ENCODE measurements at regions of chr3 and their contacts with region 1.

Region 1: DNA sequence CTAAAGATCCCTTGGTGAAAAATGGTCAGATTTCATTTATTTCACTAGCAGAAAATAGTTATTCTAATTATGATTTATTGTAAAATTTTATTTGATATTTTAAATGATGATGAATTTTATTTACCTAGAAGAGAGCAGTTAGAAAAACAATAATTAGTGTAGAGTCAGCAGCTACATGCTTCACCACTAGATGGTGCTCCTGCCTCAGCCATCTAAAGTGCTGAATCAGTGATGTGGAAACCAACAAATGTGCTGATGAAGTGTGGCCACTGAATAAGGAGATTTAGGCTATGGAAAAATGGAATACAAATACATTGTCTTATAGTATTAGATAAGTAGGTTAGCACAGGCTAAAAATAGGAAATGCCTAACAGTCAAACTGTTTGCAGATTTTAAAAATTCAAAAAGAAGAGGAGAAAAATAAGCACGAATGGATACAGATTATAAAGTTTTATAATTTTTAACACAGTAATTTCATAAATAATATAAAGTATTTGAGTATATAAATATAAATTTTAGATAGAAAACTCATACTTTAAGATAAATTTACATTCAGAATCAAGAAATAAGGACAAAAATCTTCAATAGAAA is 109.8 kb downstream of the PPP2R3A start:
- DNase-seq: peak; percentile 74 to 78
- H3K4me3 ChIP-seq: no peak overlapping the region
- H3K27ac ChIP-seq: no peak overlapping the region
- H3K4me1 ChIP-seq: peaks cover 0 to 24% (median 15%) of the 10 kb centered on the region in 4 donors
- H3K27me3 ChIP-seq: no peaks in the 10 kb centered on the region
- CTCF ChIP-seq: peak; percentile 87 to 92

Region 2: GRCh38 chr3:135992072-135992471 is 83.2 kb before region 1 on chr3:
- intact Hi-C with region 1: no loop called
- DNase-seq: no peak
- H3K4me3 ChIP-seq: no peak overlapping the region
- H3K27ac ChIP-seq: peak overlapping the region; percentile 13 to 33
- H3K4me1 ChIP-seq: peaks cover 0 to 54% (median 2%) of the 10 kb centered on the region in 4 donors
- H3K27me3 ChIP-seq: no peaks in the 10 kb centered on the region
- CTCF ChIP-seq: no peak

Region 3: DNA sequence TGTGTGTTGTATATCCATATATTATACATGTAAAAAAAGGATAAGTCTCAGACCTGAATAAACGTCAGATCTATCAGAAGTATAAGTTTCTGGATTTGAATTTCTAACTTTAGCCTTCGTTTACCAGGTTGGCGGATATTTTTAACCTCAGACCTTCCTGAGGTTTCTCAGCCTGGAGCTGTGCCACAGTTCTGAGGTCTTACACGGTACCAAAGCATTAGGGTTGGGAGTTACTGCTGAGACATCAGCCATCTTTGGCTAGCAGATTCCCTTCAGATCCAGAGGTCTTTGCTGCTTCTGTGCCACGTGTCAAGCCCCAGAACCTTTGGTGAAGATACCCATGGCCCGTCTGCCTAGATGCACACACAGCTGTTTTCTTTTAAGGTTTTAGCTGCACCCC is 25.1 kb before region 1 on chr3:
- intact Hi-C with region 1: no loop called
- DNase-seq: no peak
- H3K4me3 ChIP-seq: no peak overlapping the region
- H3K27ac ChIP-seq: no peak overlapping the region
- H3K4me1 ChIP-seq: no peaks in the 10 kb centered on the region
- H3K27me3 ChIP-seq: no peaks in the 10 kb centered on the region
- CTCF ChIP-seq: no peak

Region 4: DNA sequence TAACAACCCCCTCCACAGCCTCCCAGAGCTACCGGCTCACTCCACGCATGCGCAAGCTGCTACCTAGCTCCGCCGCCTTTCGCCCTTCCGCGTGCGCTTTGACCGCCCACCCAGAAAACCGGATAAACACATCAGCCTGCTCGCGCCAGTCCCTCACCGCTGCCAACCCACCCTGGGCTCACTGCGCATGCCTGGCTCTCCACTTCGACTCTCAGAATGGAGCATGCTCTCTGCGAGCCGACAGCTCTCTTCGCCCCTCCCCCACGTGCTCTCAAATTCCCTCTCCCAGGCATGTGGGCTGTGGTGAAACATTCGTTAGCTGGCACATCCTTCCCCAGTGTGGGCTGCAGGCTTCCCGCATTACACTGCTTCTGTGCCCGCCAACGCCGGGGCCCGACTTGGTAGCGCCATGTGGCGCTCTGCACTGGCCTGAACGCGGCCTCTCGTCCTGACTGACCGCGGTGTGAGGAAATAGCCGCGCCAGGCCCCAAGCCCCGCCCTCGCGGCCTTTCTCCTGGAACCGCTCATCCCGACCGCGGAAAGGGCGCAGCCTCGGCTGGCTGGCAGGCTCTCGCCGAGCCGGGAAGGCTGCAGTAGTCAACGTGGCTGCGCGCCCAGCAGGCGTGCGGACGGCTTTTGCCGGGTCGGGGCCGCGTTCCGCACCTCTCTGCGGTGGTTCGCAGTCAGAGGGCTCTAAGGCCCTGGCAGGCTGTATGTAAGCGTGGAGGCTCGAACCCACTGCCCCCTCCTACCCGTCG is 121.3 kb after region 1 on chr3:
- intact Hi-C with region 1: loop called (anchors 10 kb)
- DNase-seq: peak; percentile 99
- H3K4me3 ChIP-seq: peak overlapping the region; percentile 92 to 98
- H3K27ac ChIP-seq: peak overlapping the region; percentile 100
- H3K4me1 ChIP-seq: peaks cover 0 to 27% (median 13%) of the 10 kb centered on the region in 4 donors
- H3K27me3 ChIP-seq: no peaks in the 10 kb centered on the region
- CTCF ChIP-seq: no peak

Region 5: GRCh38 chr3:136250226-136250902 is 175.1 kb after region 1 on chr3 and contains the start of gene PCCB:
- intact Hi-C with region 1: loop called (anchors 2 kb)
- DNase-seq: peak; percentile 91 to 95
- H3K4me3 ChIP-seq: peak within 1 kb of the TSS; percentile 73 to 81
- H3K27ac ChIP-seq: peak within 1 kb of the TSS; percentile 83 to 86
- H3K4me1 ChIP-seq: peaks cover 0 to 15% (median 6%) of the 10 kb centered on the region in 4 donors
- H3K27me3 ChIP-seq: no peaks in the 10 kb centered on the region
- CTCF ChIP-seq: peak; percentile 80 to 91

Region 6: DNA sequence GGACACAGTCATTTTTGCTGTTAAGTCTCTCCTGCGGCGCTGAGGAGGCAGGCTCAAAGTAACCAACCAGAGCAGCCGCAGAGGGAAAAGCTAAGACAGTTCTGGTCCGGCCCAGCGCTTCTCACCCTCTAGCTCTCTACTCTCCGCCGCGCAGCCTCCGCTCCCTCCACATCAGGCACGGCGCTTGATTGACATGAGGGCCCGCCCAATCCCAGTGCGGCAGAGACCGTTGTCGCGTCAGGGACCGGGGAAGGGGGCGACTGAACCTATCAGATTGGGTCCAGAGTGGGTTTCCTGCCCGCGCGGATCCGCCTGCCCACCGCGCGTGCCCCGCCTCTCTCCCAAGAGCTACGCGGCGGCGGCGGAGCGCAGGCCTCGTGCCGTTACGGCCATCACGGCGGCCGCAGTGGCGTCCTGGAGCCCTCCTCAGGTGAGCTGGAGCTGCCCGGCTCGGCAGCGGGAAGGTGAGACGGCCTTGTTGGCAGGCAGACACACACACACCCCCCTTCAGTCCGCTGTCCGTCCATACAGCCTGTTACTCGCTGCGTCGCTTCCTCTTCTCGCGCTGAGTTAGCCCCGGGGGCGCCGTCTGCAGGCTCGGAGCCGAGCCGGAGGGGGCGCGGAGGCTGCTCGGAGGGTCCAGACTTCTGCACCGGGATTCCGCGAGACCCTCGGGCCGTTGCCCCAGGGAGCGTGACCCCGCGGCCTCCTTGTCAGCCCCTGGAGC is 786.7 kb after region 1 on chr3 and contains the start of gene NCK1:
- intact Hi-C with region 1: loop called (anchors 10 kb)
- DNase-seq: peak; percentile 100
- H3K4me3 ChIP-seq: peak within 1 kb of the TSS; percentile 76 to 91
- H3K27ac ChIP-seq: peak within 1 kb of the TSS; percentile 92 to 98
- H3K4me1 ChIP-seq: peaks cover 0 to 19% (median 10%) of the 10 kb centered on the region in 4 donors
- H3K27me3 ChIP-seq: no peaks in the 10 kb centered on the region
- CTCF ChIP-seq: peak in 1 of 2 experiments; percentile 17

Region 7: GRCh38 chr3:137013955-137014688 is 938.8 kb after region 1 on chr3:
- intact Hi-C with region 1: loop called (anchors 5 kb)
- DNase-seq: peak; percentile 93 to 94
- H3K4me3 ChIP-seq: peak overlapping the region; percentile 47 to 60
- H3K27ac ChIP-seq: peak overlapping the region; percentile 80 to 81
- H3K4me1 ChIP-seq: peaks cover 0 to 8% (median 4%) of the 10 kb centered on the region in 4 donors
- H3K27me3 ChIP-seq: no peaks in the 10 kb centered on the region
- CTCF ChIP-seq: peak; percentile 85 to 96